Heart left ventricle (tissue), 16 donors: ENCODE measurements at regions of chr17 and their contacts with region 1.

Region 1: DNA sequence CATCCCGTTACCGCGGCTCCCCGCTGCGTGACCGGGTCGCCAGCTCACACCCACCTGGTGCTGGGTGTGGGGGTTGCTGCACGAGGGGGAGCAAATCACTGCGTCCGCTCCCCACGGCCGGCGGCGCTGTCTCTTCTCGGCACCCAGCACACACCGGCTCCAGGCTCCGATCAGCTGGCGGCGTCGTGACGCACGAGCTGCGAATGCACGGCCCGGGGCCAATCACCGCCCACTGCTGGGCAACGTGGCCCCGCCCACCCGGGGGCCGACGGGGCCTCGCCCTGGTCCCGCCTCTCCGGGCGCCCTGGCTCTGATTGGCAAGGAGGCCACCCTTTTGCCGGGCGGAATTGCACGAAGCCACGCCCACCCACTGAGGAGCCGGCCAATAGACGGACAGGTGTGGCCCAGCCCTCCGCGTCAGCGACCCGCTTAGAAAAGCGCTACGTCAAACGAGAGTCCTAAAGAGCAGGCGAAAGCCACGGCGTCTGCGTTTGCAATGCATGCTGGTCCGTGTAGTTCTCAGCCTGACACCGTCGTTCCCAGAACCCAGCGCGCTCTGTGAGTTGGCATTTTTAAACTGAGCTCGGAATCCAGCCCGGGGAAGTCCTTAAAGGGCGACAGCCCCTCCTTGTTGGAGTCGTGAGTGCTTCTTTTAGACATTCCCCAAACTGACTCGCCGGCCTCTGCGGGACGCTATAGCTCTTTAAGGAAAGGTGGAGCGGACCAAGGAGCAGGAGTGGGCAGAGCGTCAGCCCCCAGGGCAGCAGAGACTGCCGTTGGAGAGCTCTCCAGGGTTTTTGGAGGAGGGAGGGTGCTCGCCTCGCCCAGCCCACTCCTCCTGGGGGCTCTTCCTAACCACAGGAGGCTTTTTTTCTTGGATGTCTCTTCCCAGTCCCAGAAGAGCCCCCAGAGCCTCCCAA is 6.2 kb upstream of the TLCD2 start:
- DNase-seq: peak; percentile 100
- ATAC-seq: peak; percentile 71 to 81 (median 78)
- H3K4me3 ChIP-seq: peak overlapping the region; percentile 82 to 100 (median 94)
- H3K27ac ChIP-seq: peak overlapping the region; percentile 96 to 100 (median 100)
- H3K4me1 ChIP-seq: peaks cover 9 to 62% (median 49%) of the 10 kb centered on the region in 12 donors
- H3K27me3 ChIP-seq: no peaks in the 10 kb centered on the region
- CTCF ChIP-seq: peak in 2 of 12 donors; percentile 5 to 28
- POLR2A ChIP-seq: peak; percentile 99 to 100

Region 2: DNA sequence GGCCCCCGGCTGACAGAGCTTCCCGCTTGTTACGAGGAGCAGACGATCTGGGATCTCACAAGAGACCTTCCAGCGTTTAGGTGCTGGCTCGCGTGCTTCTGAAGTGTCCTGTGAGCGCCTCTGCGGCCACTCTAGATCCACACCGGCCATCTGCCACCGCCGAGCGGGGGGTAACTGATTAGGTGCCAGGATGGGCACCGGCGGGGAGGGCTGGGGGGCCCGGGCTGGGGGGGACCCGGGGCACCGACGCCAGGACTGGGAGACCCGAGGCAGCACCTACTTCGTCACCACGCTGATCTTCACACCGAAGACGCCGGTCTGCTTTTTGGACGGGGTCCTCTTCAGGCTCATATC is 704.0 kb before region 1 on chr17:
- intact Hi-C with region 1: no loop called
- DNase-seq: peak in 1 of 5 donors; percentile 20
- ATAC-seq: no peak
- H3K4me3 ChIP-seq: no peak overlapping the region
- H3K27ac ChIP-seq: peak overlapping the region in 3 of 12 donors; percentile 27 to 29 (median 28)
- H3K4me1 ChIP-seq: peaks cover 0 to 54% (median 22%) of the 10 kb centered on the region in 12 donors
- H3K27me3 ChIP-seq: no peaks in the 10 kb centered on the region
- CTCF ChIP-seq: no peak
- POLR2A ChIP-seq: no peak

Region 3: GRCh38 chr17:1561400-1562175 is 154.7 kb before region 1 on chr17:
- intact Hi-C with region 1: no loop called
- DNase-seq: peak in 2 of 5 donors; percentile 33 to 66
- ATAC-seq: peak in 3 of 4 donors; percentile 23 to 41 (median 28)
- H3K4me3 ChIP-seq: peak overlapping the region; percentile 70 to 95 (median 84)
- H3K27ac ChIP-seq: peak overlapping the region; percentile 28 to 95 (median 82)
- H3K4me1 ChIP-seq: peaks cover 3 to 51% (median 24%) of the 10 kb centered on the region in 12 donors
- H3K27me3 ChIP-seq: no peaks in the 10 kb centered on the region
- CTCF ChIP-seq: peak in 7 of 12 donors; percentile 14 to 51 (median 32)
- POLR2A ChIP-seq: no peak

Region 4: GRCh38 chr17:1648963-1649843 is 67.1 kb before region 1 on chr17:
- intact Hi-C with region 1: loop called in 3 of 10 experiments (anchors 1 to 2 kb)
- DNase-seq: peak; percentile 91 to 98 (median 95)
- ATAC-seq: peak; percentile 25 to 67 (median 50)
- H3K4me3 ChIP-seq: peak overlapping the region; percentile 68 to 99 (median 83)
- H3K27ac ChIP-seq: peak overlapping the region; percentile 93 to 100 (median 99)
- H3K4me1 ChIP-seq: peaks cover 7 to 59% (median 48%) of the 10 kb centered on the region in 12 donors
- H3K27me3 ChIP-seq: no peaks in the 10 kb centered on the region
- CTCF ChIP-seq: peak in 11 of 12 donors; percentile 73 to 97 (median 87)
- POLR2A ChIP-seq: peak; percentile 61 to 89

Region 5: DNA sequence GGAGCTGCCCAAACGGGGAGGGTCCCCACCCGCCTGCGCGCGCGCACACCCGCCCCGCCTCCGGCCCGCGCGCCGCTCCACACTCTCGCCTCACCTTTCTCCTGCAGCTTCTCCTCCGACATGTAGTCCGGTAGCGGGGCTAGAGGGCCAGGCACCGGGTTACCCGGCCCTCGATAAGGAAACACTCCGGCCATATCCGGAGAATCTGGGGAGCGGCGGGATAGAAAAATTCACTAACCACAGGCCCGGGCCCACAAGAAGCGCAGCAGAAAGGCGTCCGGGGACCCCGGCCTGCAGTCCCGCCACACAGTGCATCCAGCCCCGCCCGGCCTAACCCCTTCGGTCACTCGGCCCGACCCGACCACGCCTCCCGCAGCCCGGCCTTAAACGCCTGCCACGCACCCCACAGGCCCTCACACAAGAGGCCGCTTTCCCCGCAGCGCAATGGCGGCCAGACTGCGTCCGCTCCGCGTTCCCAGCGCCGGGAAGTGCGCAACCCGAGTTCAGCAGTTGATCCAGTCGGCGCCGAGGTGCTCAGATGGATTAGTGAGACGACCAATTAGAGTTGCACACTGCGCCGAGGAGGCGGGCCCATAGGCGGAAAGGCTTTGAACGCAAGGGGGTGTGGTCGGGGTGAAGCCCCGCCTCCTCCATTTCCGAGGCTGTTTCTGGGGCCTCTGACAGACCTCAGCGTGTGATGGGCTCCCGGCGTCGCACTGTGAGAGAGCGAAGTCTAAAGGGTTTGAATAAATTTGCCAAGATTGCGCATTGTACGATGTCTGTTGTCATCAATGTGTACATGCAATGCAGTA is 31.8 kb before region 1 on chr17 and contains the start of gene PRPF8:
- intact Hi-C with region 1: loop called in 5 of 10 experiments (anchors 2 to 5 kb)
- DNase-seq: peak; percentile 97 to 98 (median 98)
- ATAC-seq: peak; percentile 100
- H3K4me3 ChIP-seq: peak within 1 kb of the TSS; percentile 72 to 98 (median 80)
- H3K27ac ChIP-seq: peak within 1 kb of the TSS; percentile 86 to 99 (median 94)
- H3K4me1 ChIP-seq: peaks cover 0 to 25% (median 20%) of the 10 kb centered on the region in 12 donors
- H3K27me3 ChIP-seq: no peaks in the 10 kb centered on the region
- CTCF ChIP-seq: peak in 2 of 12 donors; percentile 10 to 11
- POLR2A ChIP-seq: peak; percentile 89 to 91
- total RNA-seq, gene PRPF8: 119 to 195 (median 174) TPM

Region 6: DNA sequence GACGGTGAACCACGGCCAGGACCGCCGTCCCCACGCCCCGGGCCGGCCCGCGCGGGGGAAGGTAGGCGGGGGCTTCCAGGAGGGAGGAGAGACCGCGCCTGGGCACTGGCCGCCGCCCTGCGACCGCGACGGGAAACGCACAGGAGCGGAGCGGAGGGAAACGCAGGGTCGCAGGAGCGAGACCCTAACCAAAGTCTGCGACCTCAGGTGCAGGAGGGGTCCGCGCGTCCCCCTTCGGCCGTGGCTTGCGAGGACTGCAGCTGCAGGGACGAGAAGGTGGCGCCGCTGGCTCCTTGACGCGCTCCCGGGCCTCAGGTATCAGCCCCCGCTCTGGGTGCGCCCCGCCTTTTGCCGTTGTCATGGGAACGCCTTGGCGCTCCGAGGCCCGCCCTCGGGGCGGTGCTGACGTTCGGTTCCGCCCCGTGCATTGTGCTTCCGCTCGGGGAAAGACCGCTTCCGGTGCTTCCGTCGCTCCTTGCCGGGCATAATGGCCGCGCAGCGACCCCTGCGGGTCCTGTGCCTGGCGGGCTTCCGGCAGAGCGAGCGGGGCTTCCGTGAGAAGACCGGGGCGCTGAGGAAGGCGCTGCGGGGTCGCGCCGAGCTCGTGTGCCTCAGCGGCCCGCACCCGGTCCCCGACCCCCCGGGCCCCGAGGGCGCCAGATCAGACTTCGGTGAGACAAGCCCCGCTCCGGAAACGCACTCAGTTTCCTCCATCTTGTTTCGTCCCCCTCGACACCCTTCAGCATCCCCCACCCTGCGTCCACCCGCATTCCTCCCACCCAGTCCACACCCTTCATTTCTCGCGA is 325.4 kb after region 1 on chr17 and contains the start of gene OVCA2:
- intact Hi-C with region 1: loop called in 1 of 10 experiments (anchors 10 kb)
- DNase-seq: peak; percentile 95 to 97 (median 95)
- ATAC-seq: peak; percentile 77 to 96 (median 93)
- H3K4me3 ChIP-seq: peak within 1 kb of the TSS; percentile 43 to 87 (median 76)
- H3K27ac ChIP-seq: peak within 1 kb of the TSS; percentile 81 to 97 (median 93)
- H3K4me1 ChIP-seq: peaks cover 3 to 38% (median 22%) of the 10 kb centered on the region in 12 donors
- H3K27me3 ChIP-seq: no peaks in the 10 kb centered on the region
- CTCF ChIP-seq: peak; percentile 35 to 81 (median 65)
- POLR2A ChIP-seq: peak in 1 of 2 donors; percentile 77
- total RNA-seq, gene OVCA2: 16.0 to 30.2 (median 20.0) TPM

Region 7: GRCh38 chr17:2336215-2336851 is 620.0 kb after region 1 on chr17 and contains the start of gene TSR1:
- intact Hi-C with region 1: no loop called
- DNase-seq: peak; percentile 92 to 95 (median 93)
- ATAC-seq: peak; percentile 95 to 99 (median 96)
- H3K4me3 ChIP-seq: peak within 1 kb of the TSS; percentile 70 to 96 (median 88)
- H3K27ac ChIP-seq: peak within 1 kb of the TSS; percentile 6 to 95 (median 82)
- H3K4me1 ChIP-seq: peaks cover 0 to 31% (median 17%) of the 10 kb centered on the region in 12 donors
- H3K27me3 ChIP-seq: no peaks in the 10 kb centered on the region
- CTCF ChIP-seq: peak in 8 of 12 donors; percentile 14 to 57 (median 32)
- POLR2A ChIP-seq: peak; percentile 39 to 88
- total RNA-seq, gene TSR1: 19.4 to 35.8 (median 22.3) TPM